Calu3 (cell line): ENCODE measurements at regions of chr3 and their contacts with region 1.

Region 1: GRCh38 chr3:153704115-153704514 is 417.1 kb upstream of the ARHGEF26 start:
- DNase-seq: peak; percentile 7
- H3K4me3 Mint-ChIP-seq: no peak overlapping the region
- H3K27ac Mint-ChIP-seq: no peak overlapping the region
- H3K4me1 Mint-ChIP-seq: no peaks in the 10 kb centered on the region
- H3K27me3 Mint-ChIP-seq: no peaks in the 10 kb centered on the region
- CTCF ChIP-seq: no peak

Region 2: DNA sequence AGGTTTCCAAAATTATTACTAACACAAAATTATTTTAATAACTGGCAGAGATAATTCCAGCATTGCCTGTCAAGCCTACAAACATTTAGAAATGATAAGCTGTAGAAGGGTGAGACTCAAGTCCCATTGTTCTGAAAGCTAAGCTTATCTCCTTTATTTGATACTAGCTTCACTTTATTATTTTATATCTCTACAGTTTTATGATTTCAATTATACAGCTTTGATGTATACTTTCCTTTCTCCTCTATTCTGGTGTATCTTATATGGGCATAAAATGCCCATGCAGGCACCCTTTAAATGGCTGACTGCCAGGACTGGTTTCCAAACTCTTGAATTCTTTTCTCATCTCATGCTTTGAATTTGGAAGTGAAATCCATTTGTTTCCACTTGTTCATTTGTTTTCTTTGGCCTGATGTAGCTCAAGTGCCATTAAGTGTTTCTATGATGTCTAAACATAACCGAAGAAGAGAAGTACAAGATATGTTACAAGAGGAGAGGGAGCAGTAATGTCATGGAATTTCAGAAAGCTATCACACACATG is 45.0 kb after region 1 on chr3:
- CTCF ChIA-PET with region 1: no interaction called
- intact Hi-C with region 1: no loop called
- DNase-seq: no peak
- H3K4me3 Mint-ChIP-seq: no peak overlapping the region
- H3K27ac Mint-ChIP-seq: no peak overlapping the region
- H3K4me1 Mint-ChIP-seq: peaks cover 11% of the 10 kb centered on the region
- H3K27me3 Mint-ChIP-seq: no peaks in the 10 kb centered on the region
- CTCF ChIP-seq: no peak

Region 3: GRCh38 chr3:153762411-153763235 is 58.5 kb after region 1 on chr3:
- CTCF ChIA-PET with region 1: interaction called, 3 read pairs
- intact Hi-C with region 1: loop called (anchors 2 kb)
- DNase-seq: no peak
- H3K4me3 Mint-ChIP-seq: no peak overlapping the region
- H3K27ac Mint-ChIP-seq: no peak overlapping the region
- H3K4me1 Mint-ChIP-seq: no peaks in the 10 kb centered on the region
- H3K27me3 Mint-ChIP-seq: no peaks in the 10 kb centered on the region
- CTCF ChIP-seq: no peak